Ascending aorta (tissue), 2 donors: ENCODE measurements at regions of chr11 and their contacts with region 1.

Region 1: GRCh38 chr11:125568970-125569914 is at the start of gene EI24:
- DNase-seq: peak; percentile 47 to 95
- H3K4me3 ChIP-seq: peak within 1 kb of the TSS; percentile 94 to 96
- H3K27ac ChIP-seq: peak within 1 kb of the TSS; percentile 83 to 84
- H3K4me1 ChIP-seq: peaks cover 5 to 16% of the 10 kb centered on the region in 2 donors
- H3K27me3 ChIP-seq: no peaks in the 10 kb centered on the region
- CTCF ChIP-seq: peak; percentile 60 to 74 (median 73)
- total RNA-seq, gene EI24: 111 TPM

Region 2: GRCh38 chr11:125410091-125410490 is 159.2 kb before region 1 on chr11:
- intact Hi-C with region 1: no loop called
- DNase-seq: no peak
- H3K4me3 ChIP-seq: no peak overlapping the region
- H3K27ac ChIP-seq: no peak overlapping the region
- H3K4me1 ChIP-seq: no peaks in the 10 kb centered on the region
- H3K27me3 ChIP-seq: no peaks in the 10 kb centered on the region
- CTCF ChIP-seq: no peak

Region 3: DNA sequence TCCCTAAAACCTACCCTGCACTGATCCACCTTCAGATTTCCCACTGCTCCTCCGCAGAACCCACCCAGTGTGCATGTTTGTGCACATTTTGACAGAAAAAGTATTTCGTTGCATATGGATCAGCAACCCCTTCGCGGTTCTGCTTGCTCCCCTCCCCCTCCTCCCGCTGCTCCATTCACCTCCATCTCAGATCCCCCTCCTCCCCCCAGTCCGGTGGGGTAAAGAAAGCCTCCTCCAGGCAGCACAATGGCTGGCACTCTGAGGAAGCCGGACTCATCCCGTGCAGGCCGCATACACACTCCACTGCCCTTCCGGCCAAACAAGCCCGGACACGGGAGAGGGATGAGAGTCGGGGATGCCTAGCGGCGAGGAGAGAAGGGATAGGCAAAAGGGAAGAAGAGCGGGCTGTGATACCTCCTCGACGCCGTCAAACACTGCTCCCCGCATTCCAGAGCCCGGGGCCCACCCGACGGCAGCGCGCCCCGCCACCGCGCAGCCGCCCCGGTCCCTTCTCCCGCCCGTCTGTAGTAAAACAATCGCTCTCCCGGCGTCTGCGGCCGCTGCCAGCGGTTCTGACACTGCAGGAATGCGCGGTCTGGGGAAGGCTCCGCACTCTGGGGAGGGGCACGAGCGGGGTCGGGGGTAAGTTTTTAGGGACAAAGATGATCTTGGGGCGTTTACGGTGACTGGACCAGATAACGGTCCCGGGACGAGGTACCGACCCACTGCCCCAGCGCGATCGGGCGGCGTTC is 74.1 kb before region 1 on chr11:
- intact Hi-C with region 1: loop called (anchors 2 kb)
- DNase-seq: peak in 1 of 2 donors; percentile 72
- H3K4me3 ChIP-seq: peak overlapping the region; percentile 63 to 98
- H3K27ac ChIP-seq: peak overlapping the region; percentile 80 to 96
- H3K4me1 ChIP-seq: peaks cover 7 to 8% of the 10 kb centered on the region in 2 donors
- H3K27me3 ChIP-seq: no peaks in the 10 kb centered on the region
- CTCF ChIP-seq: no peak

Region 4: DNA sequence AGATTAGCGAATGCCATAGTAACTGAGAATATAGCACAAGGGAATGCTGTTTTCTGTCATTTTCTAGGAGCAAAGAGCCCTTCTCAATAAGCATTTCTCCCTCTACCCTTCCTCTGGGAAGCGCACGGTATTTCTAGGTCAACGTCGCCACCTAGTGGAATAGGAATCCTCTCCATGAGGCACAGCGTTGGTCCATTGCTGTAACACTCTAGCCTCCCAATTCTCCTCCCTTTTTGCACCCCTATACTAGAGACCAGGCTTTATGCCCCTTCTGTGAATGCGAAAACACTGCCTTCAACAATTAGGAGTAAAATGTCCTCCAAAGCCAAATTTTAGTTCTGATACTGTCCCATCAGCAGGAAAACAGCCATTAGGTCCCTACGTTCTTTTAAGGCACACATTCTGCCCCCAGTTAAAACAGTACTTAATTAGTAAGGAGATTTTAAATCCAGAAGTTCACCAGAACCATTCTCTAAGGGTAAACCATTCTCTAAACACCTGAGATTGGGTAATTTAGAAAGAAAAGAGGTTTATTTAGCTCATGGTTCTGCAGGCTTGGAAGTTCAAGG is 305.4 kb after region 1 on chr11:
- intact Hi-C with region 1: loop called (anchors 1 kb)
- DNase-seq: peak in 1 of 2 donors; percentile 67
- H3K4me3 ChIP-seq: no peak overlapping the region
- H3K27ac ChIP-seq: no peak overlapping the region
- H3K4me1 ChIP-seq: no peaks in the 10 kb centered on the region
- H3K27me3 ChIP-seq: no peaks in the 10 kb centered on the region
- CTCF ChIP-seq: peak; percentile 63 to 74 (median 66)

Region 5: GRCh38 chr11:126062679-126063506 is 493.7 kb after region 1 on chr11 and contains the start of gene CDON:
- intact Hi-C with region 1: loop called (anchors 5 kb)
- DNase-seq: peak; percentile 43 to 93
- H3K4me3 ChIP-seq: peak within 1 kb of the TSS; percentile 78 to 89
- H3K27ac ChIP-seq: peak within 1 kb of the TSS; percentile 64 to 68
- H3K4me1 ChIP-seq: peaks cover 0 to 8% of the 10 kb centered on the region in 2 donors
- H3K27me3 ChIP-seq: no peaks in the 10 kb centered on the region
- CTCF ChIP-seq: peak in 1 of 3 experiments; percentile 12
- total RNA-seq, gene CDON: 33.0 TPM